AG04450 (cell line): ENCODE measurements at regions of chr11 and their contacts with region 1.

Region 1: GRCh38 chr11:124920870-124921609 is 2.0 kb downstream of the HEPN1 start:
- DNase-seq: no peak
- H3K4me3 ChIP-seq: peak overlapping the region; percentile 48
- H3K27ac ChIP-seq: peak overlapping the region; percentile 39
- H3K27me3 ChIP-seq: no peaks in the 10 kb centered on the region
- CTCF ChIP-seq: no peak

Region 2: DNA sequence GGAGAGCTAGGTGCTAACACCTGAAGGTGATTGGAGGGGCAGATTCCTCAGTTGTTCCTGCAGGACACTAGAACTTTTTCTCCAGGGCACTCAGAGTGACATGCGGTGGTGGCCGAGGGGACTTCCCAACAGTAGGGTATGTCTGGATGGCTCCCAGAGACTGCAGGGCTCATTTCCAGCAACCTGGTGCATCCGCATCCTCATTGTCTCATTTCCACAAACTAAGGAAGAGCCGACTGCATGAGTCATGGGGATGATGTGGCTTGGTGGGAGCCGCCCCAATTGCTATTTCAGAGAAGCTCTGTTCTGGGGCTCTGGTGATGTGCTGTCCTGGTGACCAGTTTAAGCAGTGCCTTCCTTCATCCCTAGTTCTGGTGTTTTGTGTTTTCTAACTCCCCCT is 20.6 kb before region 1 on chr11:
- CTCF ChIA-PET with region 1: interaction called, 4 read pairs
- POLR2A ChIA-PET with region 1: interaction called, 11 read pairs
- DNase-seq: peak; percentile 68
- H3K4me3 ChIP-seq: peak overlapping the region; percentile 1; the same call in 1 of the 2 replicates
- H3K27ac ChIP-seq: peak overlapping the region; percentile 99
- H3K27me3 ChIP-seq: no peaks in the 10 kb centered on the region
- CTCF ChIP-seq: no peak

Region 3: GRCh38 chr11:124934862-124935547 is 14.0 kb after region 1 on chr11:
- CTCF ChIA-PET with region 1: interaction called, 9 read pairs
- POLR2A ChIA-PET with region 1: interaction called, 16 read pairs
- DNase-seq: peak; percentile 86
- H3K4me3 ChIP-seq: no peak overlapping the region; the same call in 1 of the 2 replicates
- H3K27ac ChIP-seq: peak overlapping the region; percentile 94
- H3K27me3 ChIP-seq: no peaks in the 10 kb centered on the region
- CTCF ChIP-seq: peak; percentile 52